ENCODE measurements at regions of chr7 and their contacts with region 1.

Region 1: GRCh38 chr7:142587578-142588191 is 161.6 kb upstream of the PRSS1 start:
- DNase-seq: peak; percentile 87 to 88 (median 88)
- H3K4me3 ChIP-seq: no peak overlapping the region
- H3K27ac ChIP-seq: no peak overlapping the region
- H3K4me1 ChIP-seq: peaks cover 2 to 27% (median 22%) of the 10 kb centered on the region in 4 experiments
- H3K27me3 ChIP-seq: no peaks in the 10 kb centered on the region

Region 2: GRCh38 chr7:142088022-142088714 is 499.5 kb before region 1 on chr7:
- CTCF ChIA-PET with region 1: no interaction called
- POLR2A ChIA-PET with region 1: no interaction called
- DNase-seq: no peak
- H3K4me3 ChIP-seq: no peak overlapping the region
- H3K27ac ChIP-seq: no peak overlapping the region
- H3K4me1 ChIP-seq: no peaks in the 10 kb centered on the region
- H3K27me3 ChIP-seq: peaks cover 0 to 2% (median 0%) of the 10 kb centered on the region in 5 experiments

Region 3: DNA sequence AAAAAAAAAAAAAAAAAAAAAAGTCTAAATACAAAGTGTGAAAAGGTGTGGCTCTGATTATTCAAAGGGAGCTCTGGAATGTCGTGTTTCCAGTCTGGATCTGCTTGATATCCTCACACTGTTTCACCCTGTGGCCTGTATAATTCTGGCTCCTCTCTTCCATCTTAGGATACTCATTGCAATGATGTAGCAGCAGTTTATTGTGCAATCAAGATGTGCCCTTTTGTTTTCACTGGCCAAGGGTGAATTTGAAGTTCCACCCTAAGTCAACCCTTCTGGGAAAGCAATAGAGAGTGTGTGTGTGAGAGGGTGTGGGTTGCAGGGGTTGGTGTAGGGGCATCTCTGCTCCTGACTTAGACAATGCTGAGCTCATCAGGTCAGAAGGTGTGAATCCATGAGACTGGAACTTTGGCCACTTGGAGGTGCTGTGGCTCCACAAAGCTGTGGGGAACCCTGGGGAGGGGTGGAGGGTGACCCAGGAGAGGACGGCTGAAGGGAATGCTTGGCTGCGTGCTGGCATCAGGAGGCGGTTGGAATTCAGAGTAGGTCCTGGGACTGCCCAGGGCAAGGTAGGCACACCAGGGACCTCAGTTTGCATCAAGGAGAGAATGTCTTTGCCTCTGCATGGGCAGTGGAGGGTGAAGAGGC is 211.9 kb before region 1 on chr7:
- CTCF ChIA-PET with region 1: no interaction called
- POLR2A ChIA-PET with region 1: no interaction called
- DNase-seq: peak in 2 of 3 donors; percentile 33 to 44
- H3K4me3 ChIP-seq: no peak overlapping the region
- H3K27ac ChIP-seq: no peak overlapping the region
- H3K4me1 ChIP-seq: peaks cover 0 to 19% (median 11%) of the 10 kb centered on the region in 4 experiments
- H3K27me3 ChIP-seq: no peaks in the 10 kb centered on the region

Region 4: DNA sequence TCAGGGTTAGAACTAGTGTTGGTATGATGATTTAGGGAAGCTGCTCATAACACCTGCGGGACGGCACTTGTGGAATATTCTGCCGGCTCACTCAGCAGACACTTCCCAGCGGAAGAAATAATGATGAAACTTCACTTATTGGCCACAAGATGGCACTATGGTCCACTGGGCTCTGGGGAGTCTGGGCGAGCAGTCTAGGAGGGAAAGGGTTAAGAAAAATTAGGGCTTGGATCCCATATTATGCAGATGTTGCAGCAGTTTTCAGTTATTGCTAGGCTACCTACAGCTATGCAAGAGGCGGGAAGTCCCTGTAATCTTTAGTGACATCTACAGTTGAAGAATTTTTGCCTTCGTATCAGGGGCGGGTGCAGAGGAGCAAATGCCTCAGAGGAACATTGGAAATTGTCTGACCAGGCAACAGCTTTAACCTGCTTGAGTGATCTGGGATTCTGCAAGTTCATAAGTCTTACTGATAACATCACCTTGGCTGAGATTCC is 91.1 kb before region 1 on chr7:
- CTCF ChIA-PET with region 1: interaction called, 11 read pairs
- POLR2A ChIA-PET with region 1: no interaction called
- DNase-seq: peak; percentile 70 to 84 (median 83)
- H3K4me3 ChIP-seq: peak overlapping the region in 4 of 7 experiments; percentile 21 to 57 (median 36)
- H3K27ac ChIP-seq: peak overlapping the region; percentile 27 to 32
- H3K4me1 ChIP-seq: peaks cover 11 to 69% (median 52%) of the 10 kb centered on the region in 4 experiments
- H3K27me3 ChIP-seq: no peaks in the 10 kb centered on the region

Region 5: DNA sequence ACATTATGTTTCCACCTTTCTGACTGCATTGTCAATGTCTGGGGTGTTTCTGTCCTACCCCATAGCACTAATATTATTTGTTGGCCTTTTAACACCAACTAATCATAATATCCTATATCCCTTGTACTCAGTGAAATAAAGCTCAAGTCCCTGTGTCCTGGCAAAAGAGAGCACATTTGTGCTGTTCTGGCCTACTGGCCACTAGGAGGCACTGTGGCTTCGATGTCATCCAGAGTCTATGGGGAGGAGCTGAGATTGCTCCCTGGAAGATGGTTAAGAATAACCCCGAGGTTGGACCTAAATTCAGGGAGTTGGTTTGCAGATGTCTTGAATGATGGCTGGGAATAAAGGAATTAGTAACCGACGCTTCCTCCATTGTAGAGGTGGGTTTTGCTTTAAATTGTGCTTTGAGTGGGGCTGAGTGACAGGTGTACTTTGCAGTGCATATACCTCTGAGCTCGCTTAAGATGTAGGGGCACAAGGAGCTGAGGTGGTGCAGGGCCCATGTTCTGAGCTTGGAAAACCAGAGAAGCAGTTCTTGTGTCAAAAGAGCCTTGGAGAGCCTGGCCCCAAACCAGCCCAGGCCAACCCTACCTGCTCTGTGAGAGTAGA is 29.6 kb before region 1 on chr7:
- CTCF ChIA-PET with region 1: interaction called, 260 read pairs
- POLR2A ChIA-PET with region 1: interaction called, 3 read pairs
- DNase-seq: peak; percentile 71 to 77 (median 75)
- H3K4me3 ChIP-seq: peak overlapping the region in 6 of 7 experiments; percentile 17 to 82 (median 65)
- H3K27ac ChIP-seq: peak overlapping the region; percentile 49 to 77
- H3K4me1 ChIP-seq: peaks cover 18 to 94% (median 80%) of the 10 kb centered on the region in 4 experiments
- H3K27me3 ChIP-seq: no peaks in the 10 kb centered on the region

Region 6: DNA sequence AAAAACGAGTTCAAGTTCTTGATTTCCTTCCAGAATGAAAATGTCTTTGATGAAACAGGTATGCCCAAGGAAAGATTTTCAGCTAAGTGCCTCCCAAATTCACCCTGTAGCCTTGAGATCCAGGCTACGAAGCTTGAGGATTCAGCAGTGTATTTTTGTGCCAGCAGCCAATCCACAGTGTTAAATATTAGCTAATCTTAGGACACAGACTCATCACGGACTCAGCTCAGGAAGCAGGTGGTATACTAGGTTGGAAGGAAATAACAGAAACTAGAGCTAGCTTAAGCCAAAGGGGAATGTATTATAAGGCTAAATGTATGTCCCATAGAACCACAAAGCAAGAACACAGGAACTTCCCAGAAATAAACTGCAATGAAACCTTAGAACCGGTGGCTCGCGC is 10.6 kb after region 1 on chr7:
- CTCF ChIA-PET with region 1: interaction called, 24 read pairs
- POLR2A ChIA-PET with region 1: no interaction called
- DNase-seq: peak in 2 of 3 donors; percentile 86 to 91
- H3K4me3 ChIP-seq: no peak overlapping the region
- H3K27ac ChIP-seq: peak overlapping the region in 1 of 2 experiments; percentile 7
- H3K4me1 ChIP-seq: peaks cover 8 to 32% (median 27%) of the 10 kb centered on the region in 4 experiments
- H3K27me3 ChIP-seq: no peaks in the 10 kb centered on the region

Region 7: GRCh38 chr7:143126140-143126539 is 538.5 kb after region 1 on chr7:
- CTCF ChIA-PET with region 1: no interaction called
- POLR2A ChIA-PET with region 1: no interaction called
- DNase-seq: peak; percentile 4 to 75 (median 66)
- H3K4me3 ChIP-seq: no peak overlapping the region
- H3K27ac ChIP-seq: no peak overlapping the region
- H3K4me1 ChIP-seq: peaks cover 0 to 8% (median 0%) of the 10 kb centered on the region in 4 experiments
- H3K27me3 ChIP-seq: peaks cover 0 to 10% (median 3%) of the 10 kb centered on the region in 5 experiments

Measured in common myeloid progenitor, CD34-positive (primary cell).